Prostate gland (tissue), 2 donors: ENCODE measurements at regions of chr14 and their contacts with region 1.

Region 1: GRCh38 chr14:21103710-21104447 is 3.0 kb downstream of the TMEM253 start:
- DNase-seq: peak; percentile 96
- H3K4me3 ChIP-seq: peak overlapping the region; percentile 61 to 73
- H3K27ac ChIP-seq: peak overlapping the region; percentile 93 to 99
- H3K4me1 ChIP-seq: peaks cover 17% of the 10 kb centered on the region
- H3K27me3 ChIP-seq: no peaks in the 10 kb centered on the region
- CTCF ChIP-seq: peak; percentile 52 to 95 (median 68)
- POLR2A ChIP-seq: peak; percentile 94

Region 2: DNA sequence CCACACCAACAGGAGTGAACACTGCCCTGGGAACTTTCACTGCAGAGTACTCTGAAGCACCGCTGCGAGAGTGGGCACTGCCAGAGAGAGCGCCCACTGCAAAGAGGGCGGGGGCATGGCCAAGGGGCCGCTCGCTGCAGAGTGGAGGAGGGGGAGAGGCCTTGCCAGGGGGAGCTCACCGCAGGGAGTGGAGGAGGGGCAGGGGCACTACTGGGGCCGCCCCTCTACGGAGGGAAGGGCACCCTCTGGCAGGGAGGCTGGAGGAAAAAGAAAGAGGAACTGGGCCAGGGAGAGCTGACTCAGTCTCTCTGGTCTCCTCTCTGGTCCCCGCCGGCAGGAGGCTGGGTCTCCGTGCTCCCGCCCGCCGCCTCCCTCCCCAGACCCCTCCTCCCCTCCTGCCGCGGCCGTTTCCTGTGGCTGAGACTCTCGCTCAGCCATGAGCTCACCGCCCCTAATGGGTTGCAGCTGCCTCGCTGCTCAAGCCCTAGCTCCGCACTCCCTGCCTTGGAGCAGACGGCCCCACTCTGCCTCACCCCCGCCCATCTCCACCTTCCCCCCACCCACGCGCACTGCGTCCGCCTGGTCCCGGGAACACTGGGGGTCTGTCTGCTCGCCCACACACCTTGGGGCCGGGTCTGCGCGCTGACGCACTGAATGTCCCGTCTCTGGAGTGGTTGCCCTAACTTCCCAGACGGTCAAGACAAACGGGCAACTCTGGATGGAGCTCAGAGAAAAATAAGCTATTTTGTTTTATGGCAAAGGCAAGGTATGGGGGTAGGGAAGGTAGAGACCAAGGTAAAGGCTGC is 32.5 kb before region 1 on chr14:
- intact Hi-C with region 1: loop called (anchors 2 kb)
- DNase-seq: peak; percentile 48
- H3K4me3 ChIP-seq: peak overlapping the region; percentile 51 to 62
- H3K27ac ChIP-seq: peak overlapping the region; percentile 77 to 79
- H3K4me1 ChIP-seq: peaks cover 15% of the 10 kb centered on the region
- H3K27me3 ChIP-seq: no peaks in the 10 kb centered on the region
- CTCF ChIP-seq: peak in 1 of 4 experiments; percentile 4
- POLR2A ChIP-seq: no peak

Region 3: DNA sequence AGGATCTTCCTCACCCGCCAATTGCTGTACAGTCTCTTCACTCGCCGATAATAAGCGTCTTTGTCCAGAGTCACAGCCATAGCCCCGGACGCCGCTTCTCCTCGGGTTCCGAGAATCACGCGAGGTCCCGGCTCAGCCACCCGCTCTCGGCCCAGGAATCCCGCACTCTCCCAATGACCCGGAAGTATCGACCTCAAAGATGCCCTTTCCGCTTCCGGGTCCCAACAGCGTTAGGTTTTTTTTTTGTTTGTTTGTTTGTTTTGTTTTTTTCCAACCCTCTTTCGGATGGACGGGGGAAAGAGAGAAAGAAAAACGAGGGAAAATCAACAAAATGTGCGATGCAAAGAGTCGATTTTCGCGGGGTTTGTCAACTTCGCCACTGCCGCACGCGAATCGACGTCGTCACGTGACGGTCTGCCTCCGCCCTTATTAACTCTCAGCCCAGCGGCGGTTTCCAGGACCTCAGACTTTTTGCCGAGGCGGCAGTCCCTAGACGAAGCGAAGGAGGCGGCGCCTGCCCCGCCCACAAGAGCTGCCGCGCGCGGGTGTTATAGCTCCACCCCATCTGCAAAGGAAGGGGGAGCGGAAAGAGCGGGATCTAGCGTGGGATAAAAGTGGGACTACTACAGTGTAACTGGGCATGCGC is 280.1 kb after region 1 on chr14 and contains the start of gene SUPT16H:
- intact Hi-C with region 1: loop called (anchors 10 kb)
- DNase-seq: peak; percentile 93
- H3K4me3 ChIP-seq: peak within 1 kb of the TSS; percentile 51 to 76
- H3K27ac ChIP-seq: peak within 1 kb of the TSS; percentile 83 to 94
- H3K4me1 ChIP-seq: no peaks in the 10 kb centered on the region
- H3K27me3 ChIP-seq: no peaks in the 10 kb centered on the region
- CTCF ChIP-seq: peak in 2 of 4 experiments; percentile 13 to 23
- POLR2A ChIP-seq: peak; percentile 22
- total RNA-seq, gene SUPT16H: 50.3 to 83.2 TPM